Activated CD4-positive, alpha-beta memory T cell treated with anti-CD3 and anti-CD28 coated beads, Interleukin-2, amount 10 ng/mL, durations not matched to agents 7 days and 5 days (primary cell): ENCODE measurements at regions of chr1 and their contacts with region 1.

Region 1: DNA sequence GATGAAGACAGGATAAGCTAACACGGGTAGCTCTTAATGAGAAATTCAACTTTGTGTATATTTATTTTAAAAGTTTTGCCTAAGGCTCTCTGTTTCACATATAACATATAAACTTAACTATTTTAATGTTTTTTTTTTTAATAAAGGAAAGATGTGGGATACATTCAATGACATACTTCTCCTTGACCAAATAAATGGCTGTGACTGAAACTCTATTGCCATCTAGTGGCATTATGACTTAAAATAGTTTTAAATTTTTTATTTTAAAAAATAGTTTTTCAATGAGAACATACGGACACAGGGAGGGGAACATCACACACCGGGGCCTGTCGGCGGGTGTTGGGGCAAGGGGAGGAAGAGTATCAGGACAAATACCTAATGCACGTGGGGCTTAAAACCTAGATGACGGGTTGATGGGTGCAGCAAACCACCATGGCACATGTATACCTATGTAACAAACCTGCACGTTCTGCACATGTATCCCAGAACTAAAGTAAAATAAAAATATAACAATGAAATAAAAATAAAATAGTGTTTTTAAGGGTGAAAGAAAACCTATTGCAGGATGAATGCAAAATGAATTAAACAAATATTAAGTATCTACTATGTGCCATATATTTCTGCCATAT is 83.4 kb downstream of the LYST start:
- DNase-seq: no peak
- H3K4me3 Mint-ChIP-seq: no peak overlapping the region
- H3K27ac Mint-ChIP-seq: no peak overlapping the region
- H3K4me1 Mint-ChIP-seq: no peaks in the 10 kb centered on the region
- H3K27me3 Mint-ChIP-seq: no peaks in the 10 kb centered on the region

Region 2: GRCh38 chr1:235513495-235514366 is 269.5 kb before region 1 on chr1:
- CTCF ChIA-PET with region 1: interaction called, 20 read pairs
- POLR2A ChIA-PET with region 1: interaction called, 3 read pairs
- DNase-seq: no peak
- H3K4me3 Mint-ChIP-seq: no peak overlapping the region
- H3K27ac Mint-ChIP-seq: no peak overlapping the region
- H3K4me1 Mint-ChIP-seq: no peaks in the 10 kb centered on the region
- H3K27me3 Mint-ChIP-seq: peaks cover 16% of the 10 kb centered on the region

Region 3: GRCh38 chr1:235597867-235598553 is 185.3 kb before region 1 on chr1:
- CTCF ChIA-PET with region 1: interaction called, 10 read pairs
- POLR2A ChIA-PET with region 1: no interaction called
- DNase-seq: no peak
- H3K4me3 Mint-ChIP-seq: no peak overlapping the region
- H3K27ac Mint-ChIP-seq: no peak overlapping the region
- H3K4me1 Mint-ChIP-seq: peaks cover 6% of the 10 kb centered on the region
- H3K27me3 Mint-ChIP-seq: peaks cover 7% of the 10 kb centered on the region

Region 4: DNA sequence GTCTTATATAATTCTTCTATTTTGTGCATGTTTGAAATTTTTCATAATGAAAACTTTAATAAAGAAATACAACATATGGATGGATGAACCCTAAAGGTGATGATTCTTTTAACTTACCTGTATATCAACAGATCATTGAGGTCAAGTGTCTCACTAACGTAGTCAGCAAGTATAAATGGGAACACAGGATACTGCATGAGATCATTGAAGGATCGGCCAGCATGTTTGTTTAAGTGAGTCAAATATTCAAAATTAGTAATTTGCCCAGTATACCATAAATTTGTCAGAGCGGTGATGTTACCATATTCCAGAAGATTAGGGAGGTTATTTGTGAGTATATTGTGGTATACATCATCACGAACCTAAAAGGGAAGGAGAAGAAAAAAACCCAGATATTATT is 62.7 kb before region 1 on chr1:
- CTCF ChIA-PET with region 1: no interaction called
- POLR2A ChIA-PET with region 1: no interaction called
- DNase-seq: no peak
- H3K4me3 Mint-ChIP-seq: no peak overlapping the region
- H3K27ac Mint-ChIP-seq: no peak overlapping the region
- H3K4me1 Mint-ChIP-seq: no peaks in the 10 kb centered on the region
- H3K27me3 Mint-ChIP-seq: no peaks in the 10 kb centered on the region

Region 5: GRCh38 chr1:235767795-235768194 is 15.5 kb before region 1 on chr1:
- CTCF ChIA-PET with region 1: interaction called, 18 read pairs
- POLR2A ChIA-PET with region 1: no interaction called
- DNase-seq: no peak
- H3K4me3 Mint-ChIP-seq: no peak overlapping the region
- H3K27ac Mint-ChIP-seq: no peak overlapping the region
- H3K4me1 Mint-ChIP-seq: peaks cover 7% of the 10 kb centered on the region
- H3K27me3 Mint-ChIP-seq: no peaks in the 10 kb centered on the region

Region 6: GRCh38 chr1:235843461-235843961 is 60.2 kb after region 1 on chr1:
- CTCF ChIA-PET with region 1: interaction called, 13 read pairs
- POLR2A ChIA-PET with region 1: no interaction called
- DNase-seq: no peak
- H3K4me3 Mint-ChIP-seq: no peak overlapping the region
- H3K27ac Mint-ChIP-seq: no peak overlapping the region
- H3K4me1 Mint-ChIP-seq: peaks cover 33% of the 10 kb centered on the region
- H3K27me3 Mint-ChIP-seq: no peaks in the 10 kb centered on the region